ENCODE measurements at regions of chr3 and their contacts with region 1.

Region 1: GRCh38 chr3:50358911-50359759 is at the start of gene TMEM115:
- DNase-seq: peak; percentile 71 to 99 (median 95)
- ATAC-seq: peak; percentile 100
- H3K4me3 ChIP-seq: peak within 1 kb of the TSS; percentile 88
- H3K4me3 Mint-ChIP-seq: peak within 1 kb of the TSS; percentile 91 to 99 (median 98)
- H3K27ac ChIP-seq: peak within 1 kb of the TSS; percentile 93
- H3K27ac Mint-ChIP-seq: peak within 1 kb of the TSS; percentile 73 to 98 (median 96)
- H3K4me1 ChIP-seq: peaks cover 30% of the 10 kb centered on the region in 2 donors
- H3K4me1 Mint-ChIP-seq: peaks cover 32 to 54% (median 43%) of the 10 kb centered on the region in 7 donors
- H3K27me3 ChIP-seq: no peaks in the 10 kb centered on the region
- H3K27me3 Mint-ChIP-seq: no peaks in the 10 kb centered on the region
- total RNA-seq, gene TMEM115: 17.7 to 32.4 (median 19.9) TPM

Region 2: DNA sequence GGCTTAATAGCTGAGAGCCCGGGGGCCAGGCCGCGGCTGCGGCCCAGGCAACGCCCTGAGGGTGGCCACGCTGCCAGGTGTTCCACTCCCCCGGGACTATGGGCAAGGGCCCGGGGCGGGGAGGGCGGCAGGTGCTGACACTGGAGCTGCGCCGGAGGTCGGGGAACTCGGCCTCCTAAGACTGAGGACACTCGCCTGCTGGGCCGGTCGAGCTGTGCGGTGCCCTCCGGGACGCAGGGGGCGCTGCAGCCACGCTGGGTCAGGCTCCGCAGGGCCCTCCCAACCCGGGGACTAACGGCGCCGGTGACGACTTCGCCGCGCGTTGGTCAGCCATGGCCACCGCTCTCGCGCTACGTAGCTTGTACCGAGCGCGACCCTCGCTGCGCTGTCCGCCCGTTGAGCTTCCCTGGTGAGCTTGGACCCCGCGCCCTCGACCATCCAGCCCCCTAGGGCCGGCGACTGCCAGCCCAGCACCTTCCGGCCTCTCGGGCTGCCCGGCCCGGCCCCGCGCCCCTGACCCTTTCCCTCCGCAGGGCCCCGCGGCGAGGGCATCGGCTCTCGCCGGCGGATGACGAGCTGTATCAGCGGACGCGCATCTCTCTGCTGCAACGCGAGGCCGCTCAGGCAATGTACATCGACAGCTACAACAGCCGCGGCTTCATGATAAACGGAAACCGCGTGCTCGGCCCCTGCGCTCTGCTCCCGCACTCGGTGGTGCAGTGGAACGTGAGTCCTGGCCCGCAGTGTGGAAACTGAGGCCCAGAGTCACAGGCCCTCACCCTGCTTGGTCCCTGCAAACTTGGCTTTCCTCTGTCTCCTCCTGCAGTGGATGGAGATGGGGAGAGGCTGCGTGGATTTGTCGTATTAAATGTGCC is 1337.1 kb before region 1 on chr3 and contains the start of gene NDUFAF3:
- CTCF ChIA-PET with region 1: no interaction called
- POLR2A ChIA-PET with region 1: no interaction called
- intact Hi-C with region 1: loop called in 1 of 2 experiments (anchors 10 kb)
- DNase-seq: peak; percentile 84 to 96 (median 89)
- ATAC-seq: peak; percentile 89
- H3K4me3 ChIP-seq: peak within 1 kb of the TSS; percentile 99
- H3K4me3 Mint-ChIP-seq: peak within 1 kb of the TSS; percentile 92 to 99 (median 97)
- H3K27ac ChIP-seq: peak within 1 kb of the TSS; percentile 98
- H3K27ac Mint-ChIP-seq: peak within 1 kb of the TSS; percentile 95 to 99 (median 98)
- H3K4me1 ChIP-seq: peaks cover 24 to 25% of the 10 kb centered on the region in 2 donors
- H3K4me1 Mint-ChIP-seq: peaks cover 21 to 61% (median 47%) of the 10 kb centered on the region in 7 donors
- H3K27me3 ChIP-seq: no peaks in the 10 kb centered on the region
- H3K27me3 Mint-ChIP-seq: peaks cover 0 to 2% (median 0%) of the 10 kb centered on the region in 5 donors
- total RNA-seq, gene NDUFAF3: 63.8 to 110 (median 89.3) TPM

Region 3: DNA sequence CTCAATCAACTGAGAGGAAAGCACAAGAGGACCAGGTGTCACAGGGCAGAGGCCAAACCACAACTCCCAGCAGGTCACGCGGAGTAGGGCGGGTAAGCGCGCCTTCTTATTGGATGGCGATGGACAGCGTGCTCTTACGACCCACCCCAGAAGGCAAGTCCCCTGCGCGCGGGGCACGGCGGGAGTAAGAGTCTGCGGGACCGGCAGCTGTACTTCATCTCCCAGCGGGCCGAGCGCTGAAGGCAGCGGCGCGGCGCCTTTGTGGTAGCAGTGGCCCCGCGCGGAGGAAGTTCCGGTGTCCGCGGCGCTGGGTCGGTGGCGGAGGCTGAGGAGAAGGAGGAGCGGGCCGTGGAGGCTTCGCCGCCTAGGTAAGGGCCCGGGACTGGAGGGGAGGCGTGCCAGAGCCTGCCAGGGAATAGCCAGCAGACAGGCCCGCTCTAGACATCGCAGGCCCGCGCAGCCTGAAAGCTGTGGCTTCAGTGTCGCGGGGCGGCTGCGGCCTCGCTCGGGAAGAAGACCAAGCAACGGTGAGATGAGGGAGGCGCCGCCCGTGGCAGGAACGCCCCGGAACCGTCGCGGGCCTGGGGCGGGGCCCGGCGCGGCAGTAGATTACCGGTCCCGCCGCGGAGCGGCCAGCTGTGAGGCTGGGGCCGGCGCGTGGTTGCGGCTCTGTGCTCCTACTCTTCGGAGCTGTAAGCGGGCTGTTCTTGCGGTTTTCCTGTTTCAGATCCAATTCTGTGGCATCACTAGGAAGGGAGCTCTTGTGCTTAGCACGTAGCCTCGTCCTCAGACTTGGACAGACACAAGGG is 419.1 kb before region 1 on chr3 and contains the start of gene RBM6:
- CTCF ChIA-PET with region 1: no interaction called
- POLR2A ChIA-PET with region 1: no interaction called
- intact Hi-C with region 1: loop called (anchors 5 to 10 kb)
- DNase-seq: peak; percentile 84 to 95 (median 93)
- ATAC-seq: peak; percentile 98
- H3K4me3 ChIP-seq: peak within 1 kb of the TSS; percentile 88
- H3K4me3 Mint-ChIP-seq: peak within 1 kb of the TSS; percentile 93 to 100 (median 98)
- H3K27ac ChIP-seq: peak within 1 kb of the TSS; percentile 97
- H3K27ac Mint-ChIP-seq: peak within 1 kb of the TSS; percentile 91 to 99 (median 97)
- H3K4me1 ChIP-seq: peaks cover 8 to 15% of the 10 kb centered on the region in 2 donors
- H3K4me1 Mint-ChIP-seq: peaks cover 7 to 41% (median 32%) of the 10 kb centered on the region in 7 donors
- H3K27me3 ChIP-seq: no peaks in the 10 kb centered on the region
- H3K27me3 Mint-ChIP-seq: peaks cover 0 to 1% (median 0%) of the 10 kb centered on the region in 5 donors
- total RNA-seq, gene RBM6: 103 to 208 (median 153) TPM

Region 4: GRCh38 chr3:50235716-50236496 is 123.2 kb before region 1 on chr3 and contains the start of gene GNAI2:
- CTCF ChIA-PET with region 1: interaction called, 3 read pairs
- POLR2A ChIA-PET with region 1: interaction called, 3 read pairs
- intact Hi-C with region 1: loop called (anchors 2 to 5 kb)
- DNase-seq: peak; percentile 95 to 99 (median 99)
- ATAC-seq: peak; percentile 93
- H3K4me3 ChIP-seq: peak within 1 kb of the TSS; percentile 90
- H3K4me3 Mint-ChIP-seq: peak within 1 kb of the TSS; percentile 92 to 99 (median 98)
- H3K27ac ChIP-seq: peak within 1 kb of the TSS; percentile 84
- H3K27ac Mint-ChIP-seq: peak within 1 kb of the TSS; percentile 87 to 97 (median 95)
- H3K4me1 ChIP-seq: peaks cover 30 to 35% of the 10 kb centered on the region in 2 donors
- H3K4me1 Mint-ChIP-seq: peaks cover 12 to 41% (median 37%) of the 10 kb centered on the region in 7 donors
- H3K27me3 ChIP-seq: no peaks in the 10 kb centered on the region
- H3K27me3 Mint-ChIP-seq: no peaks in the 10 kb centered on the region
- total RNA-seq, gene GNAI2: 225 to 442 (median 282) TPM

Region 5: GRCh38 chr3:50321336-50322114 is 37.6 kb before region 1 on chr3:
- CTCF ChIA-PET with region 1: interaction called, 3 read pairs
- POLR2A ChIA-PET with region 1: interaction called, 656 read pairs
- intact Hi-C with region 1: loop called in 1 of 2 experiments (anchors 1 kb)
- DNase-seq: peak; percentile 67 to 90 (median 83)
- ATAC-seq: peak; percentile 83
- H3K4me3 ChIP-seq: peak overlapping the region; percentile 97
- H3K4me3 Mint-ChIP-seq: peak overlapping the region; percentile 74 to 90 (median 82)
- H3K27ac ChIP-seq: peak overlapping the region; percentile 95
- H3K27ac Mint-ChIP-seq: peak overlapping the region; percentile 40 to 96 (median 93)
- H3K4me1 ChIP-seq: peaks cover 12 to 21% of the 10 kb centered on the region in 2 donors
- H3K4me1 Mint-ChIP-seq: peaks cover 21 to 45% (median 36%) of the 10 kb centered on the region in 7 donors
- H3K27me3 ChIP-seq: no peaks in the 10 kb centered on the region
- H3K27me3 Mint-ChIP-seq: no peaks in the 10 kb centered on the region

Region 6: GRCh38 chr3:50337191-50337841 is 21.8 kb before region 1 on chr3:
- CTCF ChIA-PET with region 1: interaction called, 3 read pairs
- POLR2A ChIA-PET with region 1: interaction called, 656 read pairs
- intact Hi-C with region 1: loop called (anchors 1 kb)
- DNase-seq: peak; percentile 83 to 98 (median 91)
- ATAC-seq: peak; percentile 88
- H3K4me3 ChIP-seq: peak overlapping the region; percentile 83
- H3K4me3 Mint-ChIP-seq: peak overlapping the region; percentile 92 to 97 (median 95)
- H3K27ac ChIP-seq: peak overlapping the region; percentile 92
- H3K27ac Mint-ChIP-seq: peak overlapping the region; percentile 92 to 97 (median 96)
- H3K4me1 ChIP-seq: peaks cover 43 to 58% of the 10 kb centered on the region in 2 donors
- H3K4me1 Mint-ChIP-seq: peaks cover 35 to 73% (median 68%) of the 10 kb centered on the region in 7 donors
- H3K27me3 ChIP-seq: no peaks in the 10 kb centered on the region
- H3K27me3 Mint-ChIP-seq: peaks cover 0 to 3% (median 0%) of the 10 kb centered on the region in 5 donors

Region 7: GRCh38 chr3:50714946-50715345 is 355.8 kb after region 1 on chr3:
- CTCF ChIA-PET with region 1: no interaction called
- POLR2A ChIA-PET with region 1: no interaction called
- intact Hi-C with region 1: no loop called
- DNase-seq: no peak
- ATAC-seq: no peak
- H3K4me3 ChIP-seq: no peak overlapping the region
- H3K4me3 Mint-ChIP-seq: no peak overlapping the region
- H3K27ac ChIP-seq: no peak overlapping the region
- H3K27ac Mint-ChIP-seq: no peak overlapping the region
- H3K4me1 ChIP-seq: no peaks in the 10 kb centered on the region
- H3K4me1 Mint-ChIP-seq: no peaks in the 10 kb centered on the region
- H3K27me3 ChIP-seq: no peaks in the 10 kb centered on the region
- H3K27me3 Mint-ChIP-seq: peaks cover 0 to 8% (median 0%) of the 10 kb centered on the region in 5 donors

Region 8: DNA sequence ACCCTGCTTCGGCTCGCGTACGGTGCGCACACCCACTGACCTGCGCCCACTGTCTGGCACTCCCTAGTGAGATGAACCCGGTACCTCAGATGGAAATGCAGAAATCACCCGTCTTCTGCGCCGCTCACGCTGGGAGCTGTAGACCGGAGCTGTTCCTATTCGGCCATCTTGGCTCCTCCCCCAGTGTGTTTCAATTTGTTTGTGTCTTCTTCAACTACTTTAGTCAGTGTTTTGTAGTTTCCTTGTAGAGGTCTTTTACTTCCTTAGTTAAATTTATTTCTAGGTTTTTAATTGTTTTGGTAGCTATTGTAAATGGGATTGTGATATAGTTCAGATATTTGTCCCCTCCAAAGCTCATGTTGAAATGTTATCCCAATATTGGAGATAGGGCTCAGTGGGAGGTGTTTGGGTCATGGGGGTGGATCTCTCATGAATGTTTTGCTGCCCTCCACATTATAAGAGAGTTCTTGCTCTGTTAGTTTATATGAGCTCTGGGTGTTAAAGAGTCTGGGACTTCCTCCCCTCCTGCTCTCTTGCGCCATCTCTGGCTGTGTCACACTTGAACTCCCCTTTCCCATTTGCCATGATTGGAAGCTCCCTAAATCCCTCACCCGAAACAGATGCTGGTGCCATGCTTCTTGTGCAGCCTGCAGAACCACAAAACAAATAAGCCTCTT is 620.0 kb after region 1 on chr3:
- CTCF ChIA-PET with region 1: no interaction called
- POLR2A ChIA-PET with region 1: no interaction called
- intact Hi-C with region 1: no loop called
- DNase-seq: no peak
- ATAC-seq: no peak
- H3K4me3 ChIP-seq: no peak overlapping the region
- H3K4me3 Mint-ChIP-seq: no peak overlapping the region
- H3K27ac ChIP-seq: no peak overlapping the region
- H3K27ac Mint-ChIP-seq: no peak overlapping the region
- H3K4me1 ChIP-seq: no peaks in the 10 kb centered on the region
- H3K4me1 Mint-ChIP-seq: no peaks in the 10 kb centered on the region
- H3K27me3 ChIP-seq: no peaks in the 10 kb centered on the region
- H3K27me3 Mint-ChIP-seq: peaks cover 0 to 5% (median 0%) of the 10 kb centered on the region in 5 donors

Region 9: DNA sequence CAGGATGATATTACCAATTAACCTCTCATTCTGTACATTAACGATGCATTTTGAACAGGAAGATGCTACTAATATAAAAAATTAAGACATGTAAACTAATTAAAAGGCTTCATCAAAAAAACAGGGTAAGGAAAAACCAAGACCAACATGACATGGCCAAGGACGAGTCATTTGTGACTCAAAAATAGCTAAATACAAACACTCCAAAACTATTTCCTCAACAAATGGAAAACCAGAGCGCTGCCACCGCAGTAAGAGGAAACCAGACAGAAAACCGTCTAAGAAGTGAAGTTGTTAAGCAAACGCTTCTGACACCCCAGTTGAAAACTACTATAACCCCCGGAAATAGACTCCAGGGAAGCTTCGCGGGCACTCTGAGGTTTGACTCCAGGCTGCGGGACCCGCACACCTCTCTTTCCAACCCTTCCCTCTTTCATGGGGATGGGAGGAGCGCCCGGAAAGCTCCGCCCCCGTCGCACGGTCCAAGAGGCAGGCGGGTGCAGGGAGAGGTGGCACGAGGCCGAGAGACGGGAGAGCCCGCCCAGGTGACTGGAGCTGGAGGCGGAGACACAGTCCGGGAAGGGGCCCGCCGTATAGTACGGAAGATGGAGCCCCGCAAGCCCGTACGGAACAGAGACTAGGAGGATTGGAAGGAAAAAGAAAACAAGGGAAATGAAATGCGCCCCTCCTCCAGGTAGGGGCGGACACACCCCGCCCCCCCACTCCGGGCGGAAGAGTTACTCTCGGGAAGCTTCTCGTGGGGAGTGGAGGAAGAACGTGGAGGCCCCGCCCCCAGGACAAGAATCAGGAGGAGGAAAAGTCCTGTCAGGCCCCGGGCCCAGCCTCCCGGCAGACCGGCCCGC is 1140.0 kb after region 1 on chr3:
- CTCF ChIA-PET with region 1: no interaction called
- POLR2A ChIA-PET with region 1: interaction called, 3 read pairs
- intact Hi-C with region 1: loop called in 1 of 2 experiments (anchors 10 kb)
- DNase-seq: peak; percentile 52 to 90 (median 73)
- ATAC-seq: peak; percentile 58
- H3K4me3 ChIP-seq: peak overlapping the region; percentile 84
- H3K4me3 Mint-ChIP-seq: peak overlapping the region; percentile 87 to 100 (median 98)
- H3K27ac ChIP-seq: peak overlapping the region; percentile 90
- H3K27ac Mint-ChIP-seq: peak overlapping the region; percentile 90 to 99 (median 94)
- H3K4me1 ChIP-seq: peaks cover 10 to 14% of the 10 kb centered on the region in 2 donors
- H3K4me1 Mint-ChIP-seq: peaks cover 4 to 38% (median 35%) of the 10 kb centered on the region in 7 donors
- H3K27me3 ChIP-seq: no peaks in the 10 kb centered on the region
- H3K27me3 Mint-ChIP-seq: peaks cover 0 to 2% (median 0%) of the 10 kb centered on the region in 5 donors